Naive thymus-derived CD4-positive, alpha-beta T cell (primary cell): ENCODE measurements at regions of chr13 and their contacts with region 1.

Region 1: DNA sequence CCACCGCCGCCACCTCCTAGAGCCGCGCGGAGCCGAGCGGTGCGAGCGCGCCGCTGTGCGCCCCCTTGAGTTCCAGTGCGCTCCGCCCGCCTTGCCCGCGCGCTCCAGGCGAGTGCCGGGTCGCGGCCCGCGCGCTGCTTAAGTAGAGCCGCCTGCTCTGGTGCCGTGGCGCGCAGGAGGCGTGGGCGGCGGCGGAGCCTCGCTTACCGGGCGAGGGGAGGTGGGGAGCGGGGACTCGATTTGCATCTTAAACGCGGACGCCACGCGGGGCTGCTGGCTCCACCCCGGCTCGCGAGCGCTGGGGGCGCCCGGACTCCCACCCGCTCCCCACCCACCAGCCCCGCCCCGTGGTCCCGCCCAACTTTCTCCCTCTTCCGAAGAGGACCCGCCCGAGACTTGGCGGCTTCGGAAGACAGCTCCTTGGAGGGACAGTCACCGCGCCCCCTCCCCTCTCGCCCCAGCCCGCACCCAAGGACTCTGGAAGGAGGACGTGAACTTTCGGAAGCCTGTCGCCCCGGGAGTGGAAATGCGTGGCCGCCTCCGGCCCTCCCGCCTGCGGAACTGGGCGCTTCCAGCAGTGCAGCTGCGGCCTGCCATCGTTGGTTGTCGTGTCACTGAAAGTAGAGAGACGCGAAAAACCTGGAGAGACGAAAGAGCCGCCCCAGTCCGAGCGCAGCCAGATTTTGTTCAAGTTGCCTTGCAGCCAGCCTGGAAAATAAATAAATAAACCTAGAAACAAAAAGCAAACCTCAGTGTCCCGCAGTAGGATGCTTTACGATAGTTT is at the start of gene KCTD12:
- DNase-seq: peak; percentile 73 to 84 (median 80)
- ATAC-seq: peak; percentile 86
- H3K4me3 ChIP-seq: peak within 1 kb of the TSS; percentile 62
- H3K4me3 Mint-ChIP-seq: peak within 1 kb of the TSS; percentile 88 to 95 (median 92)
- H3K27ac ChIP-seq: peak within 1 kb of the TSS; percentile 55
- H3K27ac Mint-ChIP-seq: peak within 1 kb of the TSS; percentile 63 to 85 (median 76)
- H3K4me1 ChIP-seq: peaks cover 4 to 8% of the 10 kb centered on the region in 2 donors
- H3K4me1 Mint-ChIP-seq: peaks cover 20 to 37% (median 32%) of the 10 kb centered on the region in 7 donors
- H3K27me3 ChIP-seq: peaks cover 0 to 3% of the 10 kb centered on the region in 2 donors
- H3K27me3 Mint-ChIP-seq: peaks cover 0 to 47% (median 8%) of the 10 kb centered on the region in 5 donors
- total RNA-seq, gene KCTD12: 7.6 to 48.0 (median 14.0) TPM

Region 2: GRCh38 chr13:75299913-75300862 is 1586.3 kb before region 1 on chr13:
- CTCF ChIA-PET with region 1: no interaction called
- POLR2A ChIA-PET with region 1: no interaction called
- intact Hi-C with region 1: no loop called
- DNase-seq: no peak
- ATAC-seq: peak; percentile 72
- H3K4me3 ChIP-seq: no peak overlapping the region
- H3K4me3 Mint-ChIP-seq: peak overlapping the region in 4 of 10 donors; percentile 12 to 51 (median 22)
- H3K27ac ChIP-seq: no peak overlapping the region
- H3K27ac Mint-ChIP-seq: peak overlapping the region in 8 of 9 donors; percentile 20 to 79 (median 60)
- H3K4me1 ChIP-seq: peaks cover 0 to 25% of the 10 kb centered on the region in 2 donors
- H3K4me1 Mint-ChIP-seq: peaks cover 14 to 56% (median 44%) of the 10 kb centered on the region in 7 donors
- H3K27me3 ChIP-seq: no peaks in the 10 kb centered on the region
- H3K27me3 Mint-ChIP-seq: no peaks in the 10 kb centered on the region

Region 3: DNA sequence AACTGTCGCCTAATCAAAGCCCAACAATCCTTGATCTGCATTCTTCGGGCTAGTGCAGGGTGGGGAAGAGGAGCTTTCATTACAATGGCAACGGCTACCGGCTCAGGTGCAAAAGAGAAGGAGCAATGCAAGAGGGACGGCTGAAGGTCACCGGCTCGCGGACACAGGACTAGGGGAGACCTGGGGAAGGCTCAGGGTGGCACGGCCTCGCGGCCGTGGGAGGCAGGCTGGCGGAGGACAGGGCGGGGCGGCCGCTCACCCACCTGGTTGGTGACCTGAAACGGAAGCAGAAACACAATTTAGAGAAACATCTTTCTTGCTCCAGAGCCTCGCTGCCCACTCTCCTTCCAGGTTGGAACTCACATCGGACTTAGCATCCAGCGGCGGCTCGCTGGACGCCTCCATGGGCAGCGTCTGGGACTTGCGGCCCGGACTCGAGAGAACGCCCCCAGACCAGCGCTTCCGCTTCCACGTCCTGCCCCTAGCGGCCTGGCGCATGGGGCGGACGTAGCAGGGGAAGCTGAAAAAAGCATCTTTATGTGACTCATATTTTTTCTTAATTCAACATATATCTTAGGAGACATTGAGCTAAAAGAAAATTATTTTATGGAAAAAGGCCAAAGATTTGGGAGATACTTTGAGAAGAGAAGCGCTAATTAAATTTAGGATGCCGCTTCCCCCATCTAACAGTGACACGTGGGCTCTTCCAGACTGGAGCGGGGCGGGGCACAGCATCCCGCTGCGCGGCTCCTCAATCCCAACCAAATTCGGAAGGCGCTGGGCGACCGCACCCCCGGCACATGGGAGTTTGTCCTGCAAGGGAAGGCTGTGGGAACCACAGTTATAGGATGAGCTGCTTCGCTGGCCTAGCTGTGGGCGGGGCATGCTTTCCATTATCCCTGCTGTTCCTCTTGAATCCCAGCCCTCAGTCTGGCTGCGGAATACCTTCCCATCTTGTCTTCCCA is 1348.8 kb before region 1 on chr13 and contains the start of gene COMMD6:
- CTCF ChIA-PET with region 1: no interaction called
- POLR2A ChIA-PET with region 1: interaction called, 4 read pairs
- intact Hi-C with region 1: loop called in 1 of 2 experiments (anchors 1 kb)
- DNase-seq: peak; percentile 46 to 77 (median 65)
- ATAC-seq: peak; percentile 93
- H3K4me3 ChIP-seq: peak within 1 kb of the TSS; percentile 96
- H3K4me3 Mint-ChIP-seq: peak within 1 kb of the TSS; percentile 88 to 100 (median 98)
- H3K27ac ChIP-seq: peak within 1 kb of the TSS; percentile 85
- H3K27ac Mint-ChIP-seq: peak within 1 kb of the TSS; percentile 83 to 98 (median 95)
- H3K4me1 ChIP-seq: peaks cover 12 to 26% of the 10 kb centered on the region in 2 donors
- H3K4me1 Mint-ChIP-seq: peaks cover 28 to 57% (median 45%) of the 10 kb centered on the region in 7 donors
- H3K27me3 ChIP-seq: no peaks in the 10 kb centered on the region
- H3K27me3 Mint-ChIP-seq: no peaks in the 10 kb centered on the region
- total RNA-seq, gene COMMD6: 133 to 241 (median 205) TPM

Region 4: DNA sequence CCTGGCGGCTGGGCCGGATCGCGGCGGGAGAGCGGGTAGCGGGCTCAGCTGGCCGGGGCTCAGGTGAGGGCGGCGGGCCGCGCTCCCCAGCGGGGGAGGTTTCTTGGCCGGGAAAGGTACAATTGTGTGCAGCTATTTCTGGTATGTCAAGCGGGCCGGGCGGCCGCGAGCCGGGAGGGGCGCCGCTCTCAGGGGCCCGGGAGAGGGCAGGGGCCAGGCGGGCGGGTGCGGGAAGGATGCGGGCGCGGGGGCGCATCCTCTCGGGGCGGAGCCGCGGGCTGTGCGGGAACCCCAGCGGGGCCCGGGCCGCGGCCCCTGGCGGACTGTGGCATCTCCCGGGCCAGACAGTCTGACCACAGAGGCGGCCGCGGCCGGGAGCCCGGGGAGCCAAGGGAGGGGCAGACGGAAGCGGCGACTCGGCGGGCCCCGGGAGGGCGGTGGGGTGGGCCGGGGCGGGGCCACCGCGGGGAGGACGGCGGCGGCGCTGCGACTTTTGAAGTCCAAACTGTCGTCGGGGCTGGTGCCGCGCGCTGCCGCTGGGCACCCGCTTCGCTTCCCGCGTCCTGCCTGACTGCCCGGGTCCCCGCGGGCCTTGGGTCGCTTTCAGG is 1250.6 kb before region 1 on chr13 and contains the start of gene LMO7:
- CTCF ChIA-PET with region 1: no interaction called
- POLR2A ChIA-PET with region 1: no interaction called
- intact Hi-C with region 1: loop called in 1 of 2 experiments (anchors 5 kb)
- DNase-seq: peak; percentile 39 to 60 (median 44)
- ATAC-seq: peak; percentile 69
- H3K4me3 ChIP-seq: peak within 1 kb of the TSS; percentile 75
- H3K4me3 Mint-ChIP-seq: peak within 1 kb of the TSS; percentile 77 to 91 (median 85)
- H3K27ac ChIP-seq: peak within 1 kb of the TSS; percentile 34
- H3K27ac Mint-ChIP-seq: peak within 1 kb of the TSS; percentile 38 to 82 (median 71)
- H3K4me1 ChIP-seq: no peaks in the 10 kb centered on the region
- H3K4me1 Mint-ChIP-seq: peaks cover 7 to 23% (median 18%) of the 10 kb centered on the region in 7 donors
- H3K27me3 ChIP-seq: no peaks in the 10 kb centered on the region
- H3K27me3 Mint-ChIP-seq: peaks cover 0 to 21% (median 10%) of the 10 kb centered on the region in 5 donors
- total RNA-seq, gene LMO7: 18.0 to 68.1 (median 45.3) TPM

Region 5: GRCh38 chr13:75876360-75877050 is 1010.0 kb before region 1 on chr13:
- CTCF ChIA-PET with region 1: interaction called, 4 read pairs
- POLR2A ChIA-PET with region 1: interaction called, 3 read pairs
- intact Hi-C with region 1: loop called (anchors 5 kb)
- DNase-seq: peak in 8 of 9 donors; percentile 13 to 61 (median 45)
- ATAC-seq: peak; percentile 86
- H3K4me3 ChIP-seq: no peak overlapping the region
- H3K4me3 Mint-ChIP-seq: peak overlapping the region in 9 of 10 donors; percentile 16 to 78 (median 59)
- H3K27ac ChIP-seq: no peak overlapping the region
- H3K27ac Mint-ChIP-seq: peak overlapping the region in 2 of 9 donors; percentile 9 to 90
- H3K4me1 ChIP-seq: peaks cover 0 to 3% of the 10 kb centered on the region in 2 donors
- H3K4me1 Mint-ChIP-seq: peaks cover 2 to 19% (median 12%) of the 10 kb centered on the region in 7 donors
- H3K27me3 ChIP-seq: no peaks in the 10 kb centered on the region
- H3K27me3 Mint-ChIP-seq: peaks cover 0 to 12% (median 5%) of the 10 kb centered on the region in 5 donors

Region 6: GRCh38 chr13:76723551-76724232 is 162.8 kb before region 1 on chr13:
- CTCF ChIA-PET with region 1: no interaction called
- POLR2A ChIA-PET with region 1: interaction called, 3 read pairs
- intact Hi-C with region 1: loop called in 1 of 2 experiments (anchors 2 kb)
- DNase-seq: peak in 5 of 9 donors; percentile 15 to 29 (median 26)
- ATAC-seq: peak; percentile 72
- H3K4me3 ChIP-seq: peak overlapping the region; percentile 22
- H3K4me3 Mint-ChIP-seq: no peak overlapping the region
- H3K27ac ChIP-seq: no peak overlapping the region
- H3K27ac Mint-ChIP-seq: no peak overlapping the region
- H3K4me1 ChIP-seq: peaks cover 0 to 8% of the 10 kb centered on the region in 2 donors
- H3K4me1 Mint-ChIP-seq: no peaks in the 10 kb centered on the region
- H3K27me3 ChIP-seq: no peaks in the 10 kb centered on the region
- H3K27me3 Mint-ChIP-seq: peaks cover 0 to 3% (median 0%) of the 10 kb centered on the region in 5 donors

Region 7: DNA sequence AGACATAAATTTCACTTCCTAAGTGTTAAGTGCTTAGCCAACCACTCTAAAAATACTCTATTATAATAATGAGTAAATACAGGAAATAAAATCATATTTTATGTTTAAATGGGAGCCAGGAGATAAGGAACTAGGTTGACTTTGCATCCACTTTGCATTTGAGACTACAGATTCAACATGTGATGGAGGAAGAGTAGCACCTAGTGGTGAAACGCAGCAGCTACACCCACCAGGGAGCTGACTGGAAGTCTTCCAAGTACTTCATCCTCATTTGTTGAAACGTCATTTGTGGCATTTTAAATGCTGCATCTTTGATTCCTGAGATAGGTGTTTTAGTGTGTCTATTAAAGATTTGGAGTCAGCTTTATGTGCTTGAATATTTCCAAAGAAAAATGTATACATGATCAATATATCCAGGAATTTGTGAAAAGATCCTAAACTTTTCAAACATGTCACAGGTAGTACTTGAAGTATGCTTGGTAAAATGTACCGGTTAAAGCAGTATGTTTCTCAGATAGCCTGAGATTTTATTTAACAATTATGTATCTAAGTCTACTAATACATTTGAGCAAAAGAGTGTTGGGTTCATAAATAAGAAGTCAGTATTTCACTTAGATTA is 17.2 kb after region 1 on chr13:
- CTCF ChIA-PET with region 1: interaction called, 14 read pairs
- POLR2A ChIA-PET with region 1: interaction called, 13 read pairs
- intact Hi-C with region 1: loop called (anchors 1 kb)
- DNase-seq: peak in 8 of 9 donors; percentile 51 to 75 (median 66)
- ATAC-seq: peak; percentile 94
- H3K4me3 ChIP-seq: no peak overlapping the region
- H3K4me3 Mint-ChIP-seq: no peak overlapping the region
- H3K27ac ChIP-seq: no peak overlapping the region
- H3K27ac Mint-ChIP-seq: no peak overlapping the region
- H3K4me1 ChIP-seq: no peaks in the 10 kb centered on the region
- H3K4me1 Mint-ChIP-seq: no peaks in the 10 kb centered on the region
- H3K27me3 ChIP-seq: peaks cover 0 to 3% of the 10 kb centered on the region in 2 donors
- H3K27me3 Mint-ChIP-seq: peaks cover 4 to 32% (median 30%) of the 10 kb centered on the region in 5 donors

Region 8: DNA sequence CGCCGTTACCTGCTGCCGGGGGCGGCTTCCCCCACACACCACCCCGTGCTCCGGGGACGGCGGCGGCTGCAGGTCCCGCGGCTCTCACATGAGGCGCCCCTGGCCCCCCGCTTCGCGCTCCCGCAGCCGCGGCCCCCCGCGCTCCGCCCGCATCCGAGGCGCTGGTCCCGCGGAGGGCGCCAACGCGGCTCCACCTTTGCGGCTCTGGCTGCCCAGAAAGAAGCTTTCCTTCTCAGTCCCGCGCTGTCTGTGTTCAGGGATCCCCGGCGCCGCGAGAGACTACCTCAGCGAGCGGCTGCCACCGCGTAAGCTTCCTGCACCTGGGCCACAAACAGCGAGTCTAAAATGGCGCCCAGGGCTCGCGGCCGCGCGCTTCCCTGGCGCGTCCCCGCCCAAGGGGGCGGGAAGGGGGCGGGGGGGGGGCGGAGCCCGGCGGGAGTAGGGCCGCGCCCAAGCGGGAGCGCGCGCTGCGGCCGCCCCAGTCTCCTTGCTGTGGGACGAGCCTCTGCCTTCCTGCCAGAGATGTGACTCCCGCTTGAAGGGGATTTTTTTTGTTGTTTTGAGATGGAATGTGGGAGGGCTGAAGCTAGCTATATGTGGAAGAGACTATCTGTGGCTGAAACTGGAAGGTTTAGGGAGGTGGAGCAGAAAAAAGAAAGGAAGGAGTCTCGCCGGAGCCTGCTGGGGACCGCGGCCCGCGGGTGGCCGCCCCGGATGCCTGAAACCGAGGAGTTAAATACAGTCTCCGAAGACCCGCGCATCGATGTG is 140.5 kb after region 1 on chr13 and contains the start of gene FBXL3:
- CTCF ChIA-PET with region 1: no interaction called
- POLR2A ChIA-PET with region 1: interaction called, 20 read pairs
- intact Hi-C with region 1: loop called (anchors 1 kb)
- DNase-seq: peak; percentile 77 to 88 (median 84)
- ATAC-seq: peak; percentile 90
- H3K4me3 ChIP-seq: peak within 1 kb of the TSS; percentile 87
- H3K4me3 Mint-ChIP-seq: peak within 1 kb of the TSS; percentile 93 to 100 (median 98)
- H3K27ac ChIP-seq: peak within 1 kb of the TSS; percentile 100
- H3K27ac Mint-ChIP-seq: peak within 1 kb of the TSS; percentile 92 to 99 (median 94)
- H3K4me1 ChIP-seq: peaks cover 30 to 35% of the 10 kb centered on the region in 2 donors
- H3K4me1 Mint-ChIP-seq: peaks cover 36 to 61% (median 51%) of the 10 kb centered on the region in 7 donors
- H3K27me3 ChIP-seq: no peaks in the 10 kb centered on the region
- H3K27me3 Mint-ChIP-seq: peaks cover 0 to 6% (median 3%) of the 10 kb centered on the region in 5 donors
- total RNA-seq, gene FBXL3: 44.2 to 94.2 (median 70.8) TPM